Naive thymus-derived CD4-positive, alpha-beta T cell (primary cell): ENCODE measurements at regions of chr5 and their contacts with region 1.

Region 1: DNA sequence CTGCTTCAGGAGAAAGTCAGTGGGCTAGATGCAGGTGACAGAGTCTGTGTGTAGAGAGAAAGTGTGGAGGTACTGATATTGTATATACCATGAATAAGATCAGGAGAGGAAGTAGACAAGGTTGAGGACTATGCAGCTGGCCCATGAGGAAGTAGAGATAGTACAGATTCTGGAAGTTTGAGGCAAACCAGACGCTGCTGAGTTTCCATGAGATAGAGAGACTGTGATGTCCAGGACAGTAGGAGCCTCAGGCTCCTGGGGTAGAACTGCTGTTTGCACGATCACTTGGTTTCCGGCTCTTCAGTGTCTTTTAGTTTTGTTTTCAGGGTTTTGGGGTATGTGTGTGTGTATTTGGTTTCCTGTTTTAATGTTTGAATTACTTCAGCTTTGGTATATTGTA is 13.6 kb downstream of the OTULINL start:
- DNase-seq: peak in 8 of 9 donors; percentile 29 to 69 (median 58)
- ATAC-seq: peak; percentile 72
- H3K4me3 ChIP-seq: peak overlapping the region; percentile 62
- H3K4me3 Mint-ChIP-seq: peak overlapping the region; percentile 76 to 86 (median 84)
- H3K27ac ChIP-seq: peak overlapping the region; percentile 70
- H3K27ac Mint-ChIP-seq: peak overlapping the region; percentile 94 to 99 (median 97)
- H3K4me1 ChIP-seq: peaks cover 59 to 66% of the 10 kb centered on the region in 2 donors
- H3K4me1 Mint-ChIP-seq: peaks cover 72 to 92% (median 85%) of the 10 kb centered on the region in 7 donors
- H3K27me3 ChIP-seq: no peaks in the 10 kb centered on the region
- H3K27me3 Mint-ChIP-seq: no peaks in the 10 kb centered on the region

Region 2: GRCh38 chr5:14415024-14415697 is 180.0 kb before region 1 on chr5:
- CTCF ChIA-PET with region 1: no interaction called
- POLR2A ChIA-PET with region 1: interaction called, 8 read pairs
- intact Hi-C with region 1: loop called (anchors 2 to 5 kb)
- DNase-seq: no peak
- ATAC-seq: no peak
- H3K4me3 ChIP-seq: peak overlapping the region; percentile 17
- H3K4me3 Mint-ChIP-seq: peak overlapping the region in 7 of 10 donors; percentile 57 to 87 (median 73)
- H3K27ac ChIP-seq: no peak overlapping the region
- H3K27ac Mint-ChIP-seq: peak overlapping the region; percentile 89 to 97 (median 94)
- H3K4me1 ChIP-seq: peaks cover 31 to 32% of the 10 kb centered on the region in 2 donors
- H3K4me1 Mint-ChIP-seq: peaks cover 26 to 52% (median 40%) of the 10 kb centered on the region in 7 donors
- H3K27me3 ChIP-seq: no peaks in the 10 kb centered on the region
- H3K27me3 Mint-ChIP-seq: no peaks in the 10 kb centered on the region

Region 3: DNA sequence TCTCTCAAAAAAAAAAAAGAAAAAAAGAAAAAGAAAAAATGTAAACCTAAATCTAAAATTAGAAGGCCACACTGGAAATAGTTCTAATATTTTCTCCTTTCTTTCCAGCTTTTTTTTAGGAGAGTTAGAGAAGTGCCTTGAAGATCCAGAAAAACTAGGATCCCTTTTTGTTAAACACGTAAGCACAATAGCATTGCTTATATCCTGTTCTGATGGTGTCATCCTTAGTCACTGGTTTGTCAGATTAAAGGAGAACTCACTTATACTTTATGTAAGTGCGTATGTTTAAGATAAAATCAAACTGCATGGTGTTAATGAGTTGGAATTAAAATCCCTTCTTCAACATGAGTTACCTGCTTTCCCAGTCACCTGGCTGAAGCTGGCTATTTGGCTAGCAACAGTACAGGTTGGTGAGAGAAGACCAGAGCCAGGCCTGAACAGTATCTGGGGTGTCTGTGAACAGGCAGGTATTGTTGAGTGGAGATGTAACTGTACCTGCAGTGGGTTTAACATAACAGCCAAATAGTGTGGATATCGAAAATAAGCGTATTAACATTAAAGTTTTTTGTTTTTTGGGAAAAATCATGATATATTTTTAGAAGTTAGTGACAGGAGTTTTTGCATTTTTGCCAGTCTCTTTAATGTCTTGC is 118.3 kb before region 1 on chr5:
- CTCF ChIA-PET with region 1: no interaction called
- POLR2A ChIA-PET with region 1: no interaction called
- intact Hi-C with region 1: no loop called
- DNase-seq: no peak
- ATAC-seq: no peak
- H3K4me3 ChIP-seq: no peak overlapping the region
- H3K4me3 Mint-ChIP-seq: no peak overlapping the region
- H3K27ac ChIP-seq: no peak overlapping the region
- H3K27ac Mint-ChIP-seq: no peak overlapping the region
- H3K4me1 ChIP-seq: no peaks in the 10 kb centered on the region
- H3K4me1 Mint-ChIP-seq: peaks cover 0 to 8% (median 0%) of the 10 kb centered on the region in 7 donors
- H3K27me3 ChIP-seq: no peaks in the 10 kb centered on the region
- H3K27me3 Mint-ChIP-seq: no peaks in the 10 kb centered on the region

Region 4: GRCh38 chr5:14581333-14581890 is 13.8 kb before region 1 on chr5 and contains the start of gene OTULINL:
- CTCF ChIA-PET with region 1: interaction called, 13 read pairs
- POLR2A ChIA-PET with region 1: interaction called, 65 read pairs
- intact Hi-C with region 1: loop called (anchors 1 kb)
- DNase-seq: peak; percentile 72 to 90 (median 86)
- ATAC-seq: peak; percentile 92
- H3K4me3 ChIP-seq: peak within 1 kb of the TSS; percentile 82
- H3K4me3 Mint-ChIP-seq: peak within 1 kb of the TSS; percentile 83 to 91 (median 88)
- H3K27ac ChIP-seq: peak within 1 kb of the TSS; percentile 75
- H3K27ac Mint-ChIP-seq: peak within 1 kb of the TSS; percentile 78 to 96 (median 89)
- H3K4me1 ChIP-seq: peaks cover 24 to 27% of the 10 kb centered on the region in 2 donors
- H3K4me1 Mint-ChIP-seq: peaks cover 30 to 51% (median 44%) of the 10 kb centered on the region in 7 donors
- H3K27me3 ChIP-seq: no peaks in the 10 kb centered on the region
- H3K27me3 Mint-ChIP-seq: peaks cover 0 to 27% (median 0%) of the 10 kb centered on the region in 5 donors
- total RNA-seq, gene OTULINL: 26.1 to 44.7 (median 32.4) TPM

Region 5: DNA sequence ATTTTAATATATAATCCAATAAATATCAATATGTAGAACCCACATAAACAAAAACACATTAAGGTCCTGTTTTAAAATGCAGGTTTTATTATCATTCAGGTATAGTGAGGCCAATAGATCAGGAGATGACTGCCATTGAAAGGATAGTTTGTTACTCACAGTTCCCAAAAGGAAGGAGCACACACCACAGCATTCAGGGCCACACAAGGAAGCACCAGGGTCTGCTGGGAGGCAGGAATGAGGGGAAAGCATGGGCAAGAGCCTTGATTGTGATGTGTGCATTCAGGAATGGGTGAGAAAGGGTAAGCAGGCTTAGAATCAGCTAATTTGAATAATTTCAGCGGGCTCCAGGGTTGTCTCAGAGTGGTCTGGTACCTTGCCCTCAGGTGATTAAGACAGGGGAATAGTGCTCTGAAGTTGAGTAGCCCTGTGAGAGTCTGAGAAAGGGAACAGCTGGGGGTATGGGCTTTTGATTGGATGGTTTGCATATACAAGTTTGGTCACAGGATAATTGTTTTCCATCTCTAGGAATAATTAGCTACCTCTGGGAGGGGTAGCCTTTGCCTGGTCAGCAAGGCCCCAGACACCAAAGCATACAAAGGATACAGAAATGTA is 49.5 kb after region 1 on chr5:
- CTCF ChIA-PET with region 1: interaction called, 4 read pairs
- POLR2A ChIA-PET with region 1: no interaction called
- intact Hi-C with region 1: loop called (anchors 5 kb)
- DNase-seq: no peak
- ATAC-seq: no peak
- H3K4me3 ChIP-seq: no peak overlapping the region
- H3K4me3 Mint-ChIP-seq: no peak overlapping the region
- H3K27ac ChIP-seq: no peak overlapping the region
- H3K27ac Mint-ChIP-seq: no peak overlapping the region
- H3K4me1 ChIP-seq: no peaks in the 10 kb centered on the region
- H3K4me1 Mint-ChIP-seq: peaks cover 0 to 8% (median 0%) of the 10 kb centered on the region in 7 donors
- H3K27me3 ChIP-seq: no peaks in the 10 kb centered on the region
- H3K27me3 Mint-ChIP-seq: peaks cover 5 to 42% (median 18%) of the 10 kb centered on the region in 5 donors

Region 6: GRCh38 chr5:14809369-14810155 is 214.4 kb after region 1 on chr5:
- CTCF ChIA-PET with region 1: no interaction called
- POLR2A ChIA-PET with region 1: no interaction called
- intact Hi-C with region 1: loop called in 1 of 2 experiments (anchors 10 kb)
- DNase-seq: peak; percentile 16 to 74 (median 57)
- ATAC-seq: peak; percentile 94
- H3K4me3 ChIP-seq: peak overlapping the region; percentile 21
- H3K4me3 Mint-ChIP-seq: peak overlapping the region; percentile 56 to 87 (median 78)
- H3K27ac ChIP-seq: peak overlapping the region; percentile 50
- H3K27ac Mint-ChIP-seq: peak overlapping the region; percentile 72 to 93 (median 91)
- H3K4me1 ChIP-seq: peaks cover 38 to 42% of the 10 kb centered on the region in 2 donors
- H3K4me1 Mint-ChIP-seq: peaks cover 40 to 85% (median 63%) of the 10 kb centered on the region in 7 donors
- H3K27me3 ChIP-seq: no peaks in the 10 kb centered on the region
- H3K27me3 Mint-ChIP-seq: no peaks in the 10 kb centered on the region

Region 7: DNA sequence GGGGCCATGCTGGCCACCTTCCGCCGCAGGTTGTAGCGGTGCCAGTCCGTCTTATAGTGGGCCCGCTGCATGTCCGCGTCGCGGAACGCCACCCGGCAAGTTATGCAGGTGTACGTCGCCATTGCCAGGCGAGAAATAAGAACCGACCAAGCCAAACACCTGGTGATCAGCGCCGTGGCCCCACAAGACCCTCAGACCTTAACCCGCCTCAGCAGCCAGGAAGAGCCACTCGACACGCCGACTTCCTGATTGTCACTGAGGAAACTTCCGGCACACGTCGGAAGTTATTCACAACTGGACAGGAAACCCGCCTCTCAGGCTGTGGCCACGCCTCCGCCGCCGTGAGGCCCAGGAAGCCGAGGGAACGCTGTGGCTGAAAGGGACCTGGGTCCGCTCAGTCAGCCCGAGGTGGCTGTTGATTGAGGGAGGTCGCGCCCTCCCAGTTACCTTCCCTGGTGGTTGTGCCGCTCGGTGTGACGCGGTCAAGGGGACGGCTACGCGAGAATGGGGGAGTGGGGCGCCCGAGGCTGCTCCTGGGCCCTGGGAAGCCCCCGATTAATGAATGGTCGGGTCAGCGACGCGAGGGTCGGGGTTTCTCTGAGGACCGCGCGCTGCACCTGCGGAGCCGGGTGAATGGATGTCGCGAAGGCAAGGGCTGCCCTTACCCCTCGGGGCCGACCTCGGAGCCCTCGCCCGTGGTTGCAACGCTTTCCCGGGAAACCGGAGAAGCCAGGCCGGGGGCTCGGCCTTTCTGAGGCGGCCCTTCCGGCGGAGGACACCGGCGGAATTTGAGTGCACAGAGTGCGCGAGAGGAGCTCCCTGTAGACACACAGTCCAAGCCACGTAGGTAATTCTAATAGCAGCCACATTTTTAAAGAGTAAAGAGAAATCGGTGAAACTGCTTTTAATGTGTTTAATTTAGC is 1870.6 kb after region 1 on chr5 and contains the start of gene ZNF622:
- CTCF ChIA-PET with region 1: no interaction called
- POLR2A ChIA-PET with region 1: no interaction called
- intact Hi-C with region 1: loop called in 1 of 2 experiments (anchors 10 kb)
- DNase-seq: peak; percentile 72 to 89 (median 86)
- ATAC-seq: peak; percentile 96
- H3K4me3 ChIP-seq: peak within 1 kb of the TSS; percentile 88
- H3K4me3 Mint-ChIP-seq: peak within 1 kb of the TSS; percentile 90 to 100 (median 97)
- H3K27ac ChIP-seq: peak within 1 kb of the TSS; percentile 87
- H3K27ac Mint-ChIP-seq: peak within 1 kb of the TSS; percentile 94 to 99 (median 97)
- H3K4me1 ChIP-seq: peaks cover 44 to 55% of the 10 kb centered on the region in 2 donors
- H3K4me1 Mint-ChIP-seq: peaks cover 61 to 98% (median 82%) of the 10 kb centered on the region in 7 donors
- H3K27me3 ChIP-seq: no peaks in the 10 kb centered on the region
- H3K27me3 Mint-ChIP-seq: no peaks in the 10 kb centered on the region
- total RNA-seq, gene ZNF622: 31.8 to 40.7 (median 36.0) TPM